Breast epithelium (tissue), 4 donors: ENCODE measurements at regions of chr6 and their contacts with region 1.

Region 1: GRCh38 chr6:139134817-139135581 is at the start of gene HECA:
- DNase-seq: peak; percentile 97 to 98
- H3K4me3 ChIP-seq: peak within 1 kb of the TSS; percentile 88 to 97 (median 89)
- H3K27ac ChIP-seq: peak within 1 kb of the TSS; percentile 98 to 99
- H3K4me1 ChIP-seq: no peaks in the 10 kb centered on the region
- H3K27me3 ChIP-seq: no peaks in the 10 kb centered on the region
- CTCF ChIP-seq: no peak
- POLR2A ChIP-seq: peak; percentile 42
- total RNA-seq, gene HECA: 35.1 to 54.3 (median 49.3) TPM

Region 2: DNA sequence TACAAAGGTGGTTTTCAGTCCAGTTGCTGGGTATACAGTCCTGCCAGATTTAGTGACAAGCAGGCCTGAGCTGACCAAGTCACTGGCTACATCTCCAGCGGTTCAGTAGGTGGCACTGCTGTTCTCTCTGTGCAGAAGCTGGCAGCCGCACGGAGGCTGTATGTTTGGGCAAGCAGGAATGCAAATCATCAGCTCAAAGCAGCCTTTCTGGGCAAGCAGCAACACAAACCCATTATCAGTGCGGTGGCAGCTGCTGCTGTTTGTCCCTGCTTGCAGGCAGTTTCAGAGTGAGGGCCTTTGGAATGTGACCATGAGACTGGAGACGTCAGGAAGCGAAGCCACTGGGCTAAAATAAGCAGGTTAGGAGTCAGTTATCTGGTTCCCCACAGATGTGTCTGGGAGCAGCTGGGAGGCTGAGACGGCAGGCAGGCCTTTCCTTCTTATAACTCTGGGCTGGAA is 84.3 kb after region 1 on chr6:
- intact Hi-C with region 1: no loop called
- DNase-seq: peak; percentile 82
- H3K4me3 ChIP-seq: no peak overlapping the region
- H3K27ac ChIP-seq: peak overlapping the region; percentile 74 to 76
- H3K4me1 ChIP-seq: peaks cover 0 to 3% of the 10 kb centered on the region in 2 donors
- H3K27me3 ChIP-seq: no peaks in the 10 kb centered on the region
- CTCF ChIP-seq: peak; percentile 53 to 83 (median 74)
- POLR2A ChIP-seq: no peak

Region 3: DNA sequence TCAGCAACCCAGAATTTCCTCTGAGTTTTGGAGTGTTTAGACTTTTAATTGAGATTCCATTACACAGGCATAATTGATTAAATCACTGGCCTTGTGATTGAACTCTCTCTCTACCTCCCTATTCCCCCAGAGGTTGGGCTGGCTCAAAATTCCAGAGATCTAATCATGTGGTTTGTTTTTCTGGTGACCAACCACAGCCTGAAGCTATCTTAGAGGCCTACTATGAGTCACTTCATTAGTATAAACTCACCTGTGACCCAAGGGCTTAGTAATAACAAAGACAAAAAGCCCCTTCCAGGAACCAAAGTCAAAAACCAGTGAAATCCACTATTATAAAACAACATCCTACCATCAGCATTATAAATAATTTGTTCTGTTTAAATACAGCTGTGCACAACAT is 1232.0 kb after region 1 on chr6:
- intact Hi-C with region 1: no loop called
- DNase-seq: no peak
- H3K4me3 ChIP-seq: no peak overlapping the region
- H3K27ac ChIP-seq: no peak overlapping the region
- H3K4me1 ChIP-seq: no peaks in the 10 kb centered on the region
- H3K27me3 ChIP-seq: no peaks in the 10 kb centered on the region
- CTCF ChIP-seq: no peak
- POLR2A ChIP-seq: no peak

Region 4: DNA sequence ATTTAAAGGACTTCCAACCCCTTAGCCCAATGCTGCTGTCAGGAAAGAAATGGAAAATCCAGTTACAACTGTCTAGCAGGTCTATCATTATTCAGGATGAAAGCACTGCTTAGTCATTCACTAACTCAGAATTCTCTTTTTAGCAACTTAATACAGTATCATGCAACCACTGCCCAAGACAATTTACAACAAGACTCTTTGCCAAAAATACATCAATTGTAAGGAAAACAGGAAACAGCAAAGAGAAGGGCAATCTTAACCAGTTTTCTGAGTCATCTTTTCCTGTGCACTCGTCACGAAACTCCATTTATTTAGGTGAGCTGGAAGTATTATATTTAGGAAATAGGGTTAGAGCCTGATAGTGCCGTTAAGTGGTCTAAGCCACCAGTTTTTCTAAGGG is 1437.1 kb after region 1 on chr6:
- intact Hi-C with region 1: loop called (anchors 5 kb)
- DNase-seq: no peak
- H3K4me3 ChIP-seq: no peak overlapping the region
- H3K27ac ChIP-seq: no peak overlapping the region
- H3K4me1 ChIP-seq: no peaks in the 10 kb centered on the region
- H3K27me3 ChIP-seq: no peaks in the 10 kb centered on the region
- CTCF ChIP-seq: no peak
- POLR2A ChIP-seq: no peak